Activated CD4-positive, alpha-beta T cell treated with anti-CD3 and anti-CD28 coated beads for 36 hours (primary cell): ENCODE measurements at regions of chr9 and their contacts with region 1.

Region 1: DNA sequence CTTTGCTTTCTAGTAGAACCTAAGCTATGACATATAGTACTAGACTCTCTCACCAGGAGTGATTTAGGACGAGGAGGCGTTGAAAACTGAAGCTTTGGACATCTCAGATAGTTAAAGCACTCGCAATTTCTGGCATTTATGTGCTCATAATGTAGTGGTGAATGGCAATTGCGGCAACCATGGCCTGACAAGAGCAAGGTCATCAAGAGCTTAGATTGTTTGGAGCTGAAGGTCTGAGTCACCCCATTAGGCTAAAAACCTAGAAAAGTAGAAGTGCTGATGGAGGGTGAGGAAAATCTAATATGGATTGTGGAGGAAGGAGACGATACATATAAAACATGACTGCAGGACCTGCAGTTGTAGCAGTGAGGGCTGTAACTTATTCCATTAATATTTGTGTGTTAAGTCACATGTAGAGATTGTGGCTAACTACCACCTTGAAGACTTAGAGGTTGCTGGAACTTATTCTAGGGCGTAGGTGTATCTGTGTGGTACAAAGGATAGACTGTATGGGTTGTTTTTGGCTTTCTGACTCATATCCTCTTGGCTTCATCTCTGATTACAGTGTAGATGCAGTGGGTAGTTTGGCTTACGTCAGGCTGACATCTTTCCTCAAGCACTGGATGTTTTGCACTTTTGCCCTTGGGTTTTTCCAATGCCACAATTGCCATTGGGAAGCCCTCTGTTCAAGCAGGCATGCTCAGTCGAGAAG is 138.9 kb upstream of the CDKN2B start:
- DNase-seq: peak; percentile 18
- ATAC-seq: peak; percentile 97
- H3K4me3 Mint-ChIP-seq: no peak overlapping the region
- H3K27ac Mint-ChIP-seq: no peak overlapping the region
- H3K4me1 Mint-ChIP-seq: peaks cover 17% of the 10 kb centered on the region
- H3K27me3 Mint-ChIP-seq: peaks cover 32% of the 10 kb centered on the region

Region 2: DNA sequence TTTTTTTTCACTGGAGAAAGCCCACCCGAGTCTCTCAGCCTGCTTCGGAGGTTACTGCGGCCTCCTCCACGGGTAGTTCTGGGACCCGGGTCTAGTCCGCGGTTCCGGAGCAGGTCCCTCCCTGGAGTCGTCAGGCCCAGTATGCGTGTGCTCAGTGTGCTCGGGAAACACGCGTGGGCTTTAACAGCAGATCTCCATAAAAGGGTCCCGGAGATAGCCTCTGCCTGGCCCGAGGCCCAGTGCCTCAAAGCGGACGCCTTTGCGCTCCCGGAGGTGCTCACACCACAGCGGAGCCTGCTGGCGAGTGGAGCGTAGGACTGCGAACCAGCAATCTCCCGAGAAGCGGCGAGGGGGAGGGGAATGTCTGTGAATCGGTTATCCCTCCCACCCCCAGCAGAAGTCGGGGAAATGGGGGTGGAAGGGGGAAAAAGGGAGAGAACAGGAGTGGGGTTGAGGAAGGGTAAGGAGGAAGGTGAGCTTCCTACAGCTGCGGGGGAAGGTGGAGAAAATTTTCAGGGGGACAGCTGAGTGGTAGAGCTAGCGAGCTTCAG is 182.5 kb before region 1 on chr9:
- CTCF ChIA-PET with region 1: no interaction called
- POLR2A ChIA-PET with region 1: no interaction called
- intact Hi-C with region 1: no loop called
- DNase-seq: peak; percentile 75
- ATAC-seq: peak; percentile 84
- H3K4me3 Mint-ChIP-seq: peak overlapping the region; percentile 53
- H3K27ac Mint-ChIP-seq: peak overlapping the region; percentile 5
- H3K4me1 Mint-ChIP-seq: peaks cover 24% of the 10 kb centered on the region
- H3K27me3 Mint-ChIP-seq: peaks cover 85% of the 10 kb centered on the region

Region 3: DNA sequence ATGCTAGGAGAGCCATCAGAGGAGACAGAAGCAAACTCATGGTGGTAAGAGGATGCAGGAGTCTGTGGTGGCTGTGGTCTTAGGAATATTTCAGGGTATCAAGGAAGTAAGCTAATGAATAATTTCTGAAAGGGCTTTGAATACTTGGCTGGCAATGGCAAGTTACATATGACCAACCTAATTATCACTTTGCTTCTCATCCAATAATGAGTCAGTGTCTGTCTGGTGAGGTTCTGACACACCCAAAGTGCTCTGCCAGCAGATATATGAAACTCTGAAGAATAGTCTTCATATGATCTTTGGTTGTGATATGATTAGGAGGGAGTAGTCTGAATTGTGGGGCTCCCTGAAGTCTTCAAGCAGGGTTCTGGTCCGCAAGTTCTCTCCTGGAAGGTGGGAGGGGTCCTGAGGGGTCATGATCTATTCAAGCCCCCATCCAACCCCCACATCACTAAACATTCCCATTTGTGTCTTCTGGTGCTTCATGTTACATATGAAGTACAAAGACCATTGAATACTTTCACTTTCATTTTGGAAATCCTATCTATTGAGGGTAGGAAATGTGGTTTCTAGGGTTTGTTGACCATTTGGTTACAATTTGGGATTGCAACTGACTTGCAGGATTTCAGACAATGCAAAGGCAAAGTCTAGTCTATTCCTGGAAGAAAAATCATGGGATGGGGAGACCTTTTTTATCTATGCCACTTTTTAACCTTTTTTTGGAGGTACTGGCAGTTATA is 61.0 kb after region 1 on chr9:
- CTCF ChIA-PET with region 1: no interaction called
- POLR2A ChIA-PET with region 1: no interaction called
- intact Hi-C with region 1: loop called (anchors 1 to 2 kb)
- DNase-seq: peak; percentile 25
- ATAC-seq: peak; percentile 92
- H3K4me3 Mint-ChIP-seq: no peak overlapping the region
- H3K27ac Mint-ChIP-seq: no peak overlapping the region
- H3K4me1 Mint-ChIP-seq: peaks cover 28% of the 10 kb centered on the region
- H3K27me3 Mint-ChIP-seq: peaks cover 5% of the 10 kb centered on the region